Calu3 (cell line): ENCODE measurements at regions of chr15 and their contacts with region 1.

Region 1: GRCh38 chr15:75532413-75533147 is 46.5 kb downstream of the PTPN9 start:
- DNase-seq: peak; percentile 61
- H3K4me3 Mint-ChIP-seq: no peak overlapping the region
- H3K27ac Mint-ChIP-seq: peak overlapping the region; percentile 63
- H3K4me1 Mint-ChIP-seq: peaks cover 12% of the 10 kb centered on the region
- H3K27me3 Mint-ChIP-seq: no peaks in the 10 kb centered on the region
- CTCF ChIP-seq: peak; percentile 56

Region 2: DNA sequence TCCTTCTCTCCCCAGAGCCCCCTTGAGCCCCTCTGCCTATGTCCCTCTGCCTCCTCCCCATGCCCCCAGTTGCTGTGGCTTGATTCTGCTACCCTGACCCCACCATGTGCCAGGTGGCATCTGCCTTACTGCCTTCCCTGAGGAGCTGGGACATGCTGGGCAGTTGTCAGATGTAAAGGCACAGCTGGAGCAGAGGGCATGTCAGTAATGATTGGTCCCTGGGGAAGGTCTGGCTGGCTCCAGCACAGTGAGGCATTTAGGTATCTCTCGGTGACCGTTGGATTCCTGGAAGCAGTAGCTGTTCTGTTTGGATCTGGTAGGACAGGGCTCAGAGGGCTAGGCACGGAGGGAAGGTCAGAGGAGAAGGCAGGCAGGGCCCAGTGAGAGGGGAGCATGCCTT is 512.7 kb before region 1 on chr15:
- CTCF ChIA-PET with region 1: no interaction called
- intact Hi-C with region 1: loop called (anchors 5 kb)
- DNase-seq: no peak
- H3K4me3 Mint-ChIP-seq: no peak overlapping the region
- H3K27ac Mint-ChIP-seq: no peak overlapping the region
- H3K4me1 Mint-ChIP-seq: peaks cover 11% of the 10 kb centered on the region
- H3K27me3 Mint-ChIP-seq: no peaks in the 10 kb centered on the region
- CTCF ChIP-seq: no peak